Activated CD4-positive, alpha-beta memory T cell treated with anti-CD3 and anti-CD28 coated beads for 36 hours (primary cell): ENCODE measurements at regions of chr7 and their contacts with region 1.

Region 1: DNA sequence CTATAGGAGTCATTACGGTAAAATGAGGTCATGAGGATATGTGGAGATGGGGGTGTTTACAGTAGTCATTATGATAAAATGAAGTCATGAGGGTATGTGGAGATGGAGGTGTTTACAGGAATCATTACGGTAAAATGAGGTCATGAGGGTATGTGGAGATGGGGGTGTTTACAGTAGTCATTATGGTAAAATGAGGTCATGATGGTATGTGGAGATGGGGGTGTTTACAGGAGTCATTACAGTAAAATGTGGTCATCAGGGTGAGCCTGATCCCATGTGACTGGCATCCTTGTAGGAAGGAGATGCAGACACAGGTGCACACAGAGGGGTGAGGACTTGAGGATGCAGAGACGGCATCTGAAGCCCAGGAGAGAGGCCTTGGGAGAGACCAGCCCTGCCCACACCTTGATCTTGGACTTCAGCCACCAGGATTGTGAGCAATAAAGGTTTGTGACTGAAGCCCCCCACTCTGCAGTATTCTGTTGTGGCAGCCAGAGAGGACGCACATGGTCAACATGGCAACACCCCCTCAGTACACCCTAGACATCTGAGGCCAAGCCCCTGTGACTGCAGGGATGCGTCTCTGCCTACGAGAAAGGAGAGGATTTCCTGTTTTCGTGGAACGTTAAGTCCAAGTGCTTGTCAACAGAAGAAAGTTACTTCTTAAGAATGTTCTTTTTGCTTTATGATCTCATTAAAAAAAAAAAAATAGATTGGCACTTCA is 544.4 kb downstream of the DNAJB6 start:
- DNase-seq: peak; percentile 24
- H3K4me3 Mint-ChIP-seq: no peak overlapping the region
- H3K27ac Mint-ChIP-seq: peak overlapping the region; percentile 2
- H3K4me1 Mint-ChIP-seq: peaks cover 8% of the 10 kb centered on the region
- H3K27me3 Mint-ChIP-seq: no peaks in the 10 kb centered on the region

Region 2: DNA sequence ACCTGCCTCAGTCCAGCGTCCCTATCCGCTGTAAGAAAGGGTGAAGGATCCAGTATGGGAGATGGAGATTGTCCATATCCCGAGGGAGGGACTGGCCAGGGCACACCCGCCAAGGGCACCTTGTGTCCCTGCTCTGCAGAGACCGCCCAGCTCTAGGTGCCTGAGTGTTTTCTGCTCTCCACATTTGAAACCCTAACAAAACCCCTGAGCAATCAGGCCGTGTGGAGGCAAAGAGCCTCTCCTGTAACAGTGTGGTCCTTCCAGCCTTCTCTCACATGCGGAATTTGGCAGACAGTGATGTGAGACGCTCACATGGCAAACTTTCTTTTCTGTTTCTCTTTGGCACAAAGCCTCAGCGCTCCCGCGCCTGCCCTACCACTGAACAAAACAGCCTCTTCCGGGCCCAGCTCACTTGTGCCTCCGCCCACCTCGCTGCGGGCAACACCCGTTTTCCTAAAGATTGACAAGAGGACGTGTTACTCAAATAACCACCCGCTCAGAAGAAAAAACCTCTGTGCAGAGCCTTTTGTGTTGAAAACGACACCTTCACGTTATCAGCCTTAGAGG is 29.6 kb before region 1 on chr7:
- CTCF ChIA-PET with region 1: no interaction called
- POLR2A ChIA-PET with region 1: no interaction called
- intact Hi-C with region 1: loop called (anchors 2 kb)
- DNase-seq: peak; percentile 91
- H3K4me3 Mint-ChIP-seq: peak overlapping the region; percentile 69
- H3K27ac Mint-ChIP-seq: peak overlapping the region; percentile 87
- H3K4me1 Mint-ChIP-seq: peaks cover 10% of the 10 kb centered on the region
- H3K27me3 Mint-ChIP-seq: no peaks in the 10 kb centered on the region